Heart right ventricle (tissue), 16 donors: ENCODE measurements at regions of chr5 and their contacts with region 1.

Region 1: DNA sequence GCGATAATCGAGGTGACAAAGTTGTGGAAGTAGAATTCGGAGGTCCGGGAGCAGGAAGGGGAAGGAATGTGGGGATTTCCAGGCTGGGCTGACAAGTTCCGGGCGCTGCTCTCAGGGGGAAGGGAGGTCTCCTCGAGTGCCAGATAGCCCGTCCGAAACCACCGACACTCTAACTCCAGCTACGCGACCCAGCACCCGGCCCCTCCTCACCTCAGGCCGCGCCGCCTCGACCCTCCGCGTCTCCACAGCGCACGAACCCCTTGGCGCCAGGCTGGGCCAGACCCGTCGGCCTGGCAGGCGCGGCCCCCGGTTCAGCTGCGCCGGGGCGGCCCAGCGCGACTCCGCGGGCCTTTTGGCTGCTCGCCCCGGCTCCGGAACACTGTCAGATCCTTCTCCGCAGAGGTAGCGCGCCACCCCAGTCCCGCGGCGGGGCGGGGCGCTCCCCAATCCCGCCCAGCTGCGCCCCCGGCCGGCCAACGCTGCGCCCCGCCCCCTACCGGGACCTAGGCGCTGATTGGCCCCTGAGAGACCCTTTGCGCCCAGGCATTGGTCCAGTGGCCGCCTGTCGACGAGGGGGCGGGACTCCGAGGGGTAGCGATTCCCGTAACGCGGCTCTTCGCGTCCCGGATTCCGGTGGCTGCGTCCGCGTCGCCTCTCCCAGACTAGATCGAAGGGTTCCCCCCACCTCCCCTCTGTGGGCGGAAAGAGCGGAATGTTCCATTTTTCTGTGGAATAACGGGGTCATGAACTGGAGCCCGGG is at the start of gene IL6ST:
- DNase-seq: peak; percentile 98
- ATAC-seq: peak; percentile 97 to 99 (median 99)
- H3K4me3 ChIP-seq: peak within 1 kb of the TSS; percentile 65 to 90 (median 80)
- H3K27ac ChIP-seq: peak within 1 kb of the TSS; percentile 92 to 100 (median 99)
- H3K4me1 ChIP-seq: peaks cover 0 to 57% (median 38%) of the 10 kb centered on the region in 9 donors
- H3K27me3 ChIP-seq: no peaks in the 10 kb centered on the region
- CTCF ChIP-seq: peak in 7 of 9 donors; percentile 22 to 54 (median 38)
- total RNA-seq, gene IL6ST: 99.9 to 190 (median 140) TPM

Region 2: DNA sequence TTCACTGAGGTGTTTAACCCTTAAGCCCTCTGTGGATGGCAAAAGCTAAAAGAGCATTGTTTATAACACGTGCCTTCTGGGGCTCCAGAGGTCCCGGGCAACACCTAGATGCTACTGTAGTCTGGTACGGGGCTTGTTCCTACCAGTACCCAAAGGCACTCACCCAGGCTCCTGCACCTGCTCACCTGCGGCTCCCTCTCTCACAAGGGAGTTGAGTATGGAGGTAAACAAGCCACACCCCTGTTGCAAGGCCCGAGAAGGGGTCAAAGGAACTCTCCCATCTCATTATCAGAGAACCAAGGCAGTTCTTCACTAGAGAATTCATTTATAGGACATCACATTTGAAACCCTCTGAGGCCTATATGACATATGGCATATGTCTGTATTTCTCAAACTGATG is 53.4 kb after region 1 on chr5:
- intact Hi-C with region 1: loop called in 1 of 10 experiments (anchors 5 kb)
- DNase-seq: no peak
- ATAC-seq: no peak
- H3K4me3 ChIP-seq: no peak overlapping the region
- H3K27ac ChIP-seq: no peak overlapping the region
- H3K4me1 ChIP-seq: peaks cover 0 to 37% (median 14%) of the 10 kb centered on the region in 9 donors
- H3K27me3 ChIP-seq: no peaks in the 10 kb centered on the region
- CTCF ChIP-seq: no peak

Region 3: GRCh38 chr5:56105511-56106291 is 110.9 kb after region 1 on chr5:
- intact Hi-C with region 1: loop called in 1 of 10 experiments (anchors 10 kb)
- DNase-seq: no peak
- ATAC-seq: no peak
- H3K4me3 ChIP-seq: no peak overlapping the region
- H3K27ac ChIP-seq: no peak overlapping the region
- H3K4me1 ChIP-seq: peaks cover 0 to 22% (median 0%) of the 10 kb centered on the region in 9 donors
- H3K27me3 ChIP-seq: no peaks in the 10 kb centered on the region
- CTCF ChIP-seq: no peak

Region 4: GRCh38 chr5:56190497-56190896 is 195.7 kb after region 1 on chr5:
- intact Hi-C with region 1: loop called in 2 of 10 experiments (anchors 5 kb)
- DNase-seq: peak in 1 of 2 donors; percentile 52
- ATAC-seq: peak in 6 of 8 donors; percentile 20 to 73 (median 61)
- H3K4me3 ChIP-seq: no peak overlapping the region
- H3K27ac ChIP-seq: peak overlapping the region in 2 of 10 donors; percentile 29 to 37
- H3K4me1 ChIP-seq: peaks cover 0 to 27% (median 4%) of the 10 kb centered on the region in 9 donors
- H3K27me3 ChIP-seq: no peaks in the 10 kb centered on the region
- CTCF ChIP-seq: no peak

Region 5: DNA sequence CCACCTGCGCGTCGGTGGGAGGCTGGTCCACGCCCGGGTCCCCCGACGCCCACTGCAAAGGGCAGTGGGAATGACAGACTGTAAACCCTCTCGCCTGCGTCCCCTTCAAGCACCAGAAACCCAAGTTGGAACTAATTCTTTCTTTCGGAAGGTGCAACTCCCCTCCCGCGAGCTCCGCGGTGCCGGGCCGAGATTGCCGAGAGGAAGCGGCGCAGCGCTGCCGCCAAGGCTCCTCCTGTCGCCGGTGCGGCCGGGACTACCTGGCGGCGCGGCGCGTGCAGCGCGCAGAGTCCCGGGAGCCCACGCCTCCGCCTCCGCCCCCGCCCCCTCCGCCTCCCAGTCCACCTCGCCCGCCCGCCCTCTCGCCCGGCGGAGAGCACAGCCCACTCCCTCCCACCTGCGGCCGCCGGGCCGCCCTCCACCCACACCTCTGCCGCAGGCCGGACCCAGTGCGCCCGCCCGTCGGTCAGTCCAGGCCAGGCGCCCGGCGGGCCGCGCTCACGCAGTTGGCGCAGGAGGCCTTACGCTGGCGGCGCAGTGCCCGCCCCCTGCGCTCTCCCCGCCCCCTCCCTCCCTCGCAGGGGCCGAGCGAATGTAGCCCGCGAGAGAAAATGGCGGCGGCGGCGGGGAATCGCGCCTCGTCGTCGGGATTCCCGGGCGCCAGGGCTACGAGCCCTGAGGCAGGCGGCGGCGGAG is 820.4 kb after region 1 on chr5 and contains the start of gene MAP3K1:
- intact Hi-C with region 1: loop called in 1 of 10 experiments (anchors 5 kb)
- DNase-seq: peak; percentile 72 to 84
- ATAC-seq: peak; percentile 74 to 94 (median 87)
- H3K4me3 ChIP-seq: peak within 1 kb of the TSS; percentile 64 to 96 (median 88)
- H3K27ac ChIP-seq: peak within 1 kb of the TSS; percentile 65 to 99 (median 96)
- H3K4me1 ChIP-seq: peaks cover 3 to 39% (median 28%) of the 10 kb centered on the region in 9 donors
- H3K27me3 ChIP-seq: no peaks in the 10 kb centered on the region
- CTCF ChIP-seq: peak in 4 of 9 donors; percentile 30 to 48 (median 45)
- total RNA-seq, gene MAP3K1: 4.6 to 13.3 (median 6.5) TPM